Caco-2 (cell line): ENCODE measurements at regions of chr20 and their contacts with region 1.

Region 1: GRCh38 chr20:13692802-13693736 is 54.3 kb upstream of the TASP1 start:
- DNase-seq: peak in 1 of 2 experiments; percentile 21
- H3K4me3 ChIP-seq: no peak overlapping the region
- H3K4me3 Mint-ChIP-seq: peak overlapping the region; percentile 28
- H3K27ac Mint-ChIP-seq: peak overlapping the region; percentile 60
- H3K4me1 ChIP-seq: peaks cover 9% of the 10 kb centered on the region
- H3K4me1 Mint-ChIP-seq: peaks cover 6% of the 10 kb centered on the region
- H3K27me3 ChIP-seq: no peaks in the 10 kb centered on the region
- H3K27me3 Mint-ChIP-seq: no peaks in the 10 kb centered on the region
- CTCF ChIP-seq: no peak

Region 2: GRCh38 chr20:13552061-13552460 is 141.0 kb before region 1 on chr20:
- CTCF ChIA-PET with region 1: no interaction called
- POLR2A ChIA-PET with region 1: no interaction called
- intact Hi-C with region 1: loop called (anchors 1 kb)
- DNase-seq: no peak
- H3K4me3 ChIP-seq: no peak overlapping the region
- H3K4me3 Mint-ChIP-seq: no peak overlapping the region
- H3K27ac Mint-ChIP-seq: no peak overlapping the region
- H3K4me1 ChIP-seq: no peaks in the 10 kb centered on the region
- H3K4me1 Mint-ChIP-seq: no peaks in the 10 kb centered on the region
- H3K27me3 ChIP-seq: no peaks in the 10 kb centered on the region
- H3K27me3 Mint-ChIP-seq: no peaks in the 10 kb centered on the region
- CTCF ChIP-seq: no peak